ENCODE measurements at regions of chr20 and their contacts with region 1.

Region 1: DNA sequence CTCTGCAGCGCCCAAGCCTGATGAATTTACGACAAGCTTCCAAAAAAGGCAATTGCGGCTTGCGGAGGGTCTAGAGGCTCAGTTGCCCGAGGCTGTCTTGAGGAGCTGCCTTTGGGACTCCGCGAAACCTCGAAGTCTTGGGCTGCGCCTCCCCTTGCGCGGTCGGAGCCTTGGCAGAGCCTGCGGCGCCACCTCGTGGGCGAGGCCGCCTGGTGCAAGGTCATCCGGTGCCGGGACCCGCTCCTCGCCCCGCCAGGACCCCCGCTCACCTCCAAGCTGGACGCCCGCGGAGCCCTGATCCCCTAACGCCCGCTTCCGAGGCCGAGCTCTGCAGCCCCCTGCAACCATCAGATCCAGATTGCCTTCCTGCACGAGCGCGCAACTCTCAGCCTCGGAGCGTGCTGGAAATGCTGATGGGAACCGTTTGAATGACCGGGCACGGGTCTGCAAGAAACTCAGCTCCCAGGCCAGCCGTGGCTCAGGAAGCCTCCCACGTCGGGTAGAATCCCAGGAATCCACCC is 14.9 kb upstream of the FAM210B start:
- DNase-seq: peak; percentile 76
- CTCF ChIP-seq: peak; percentile 92

Region 2: GRCh38 chr20:54668271-54669039 is 1675.5 kb before region 1 on chr20:
- in situ Hi-C with region 1: loop called (anchors 25 kb)
- DNase-seq: peak; percentile 29
- CTCF ChIP-seq: peak; percentile 75

Measured in GM13977 (cell line).